CD4-positive, alpha-beta T cell (primary cell): ENCODE measurements at regions of chr1 and their contacts with region 1.

Region 1: GRCh38 chr1:101238681-101239094 is 1.9 kb downstream of the S1PR1 start:
- DNase-seq: peak; percentile 73 to 92 (median 86)
- ATAC-seq: peak; percentile 25
- H3K4me3 ChIP-seq: peak overlapping the region; percentile 87
- H3K4me3 Mint-ChIP-seq: peak overlapping the region; percentile 98
- H3K27ac ChIP-seq: peak overlapping the region; percentile 56 to 97
- H3K27ac Mint-ChIP-seq: peak overlapping the region; percentile 97
- H3K4me1 ChIP-seq: peaks cover 48% of the 10 kb centered on the region
- H3K4me1 Mint-ChIP-seq: peaks cover 71% of the 10 kb centered on the region
- H3K27me3 ChIP-seq: no peaks in the 10 kb centered on the region
- H3K27me3 Mint-ChIP-seq: peaks cover 3% of the 10 kb centered on the region
- CTCF ChIP-seq: peak; percentile 98

Region 2: DNA sequence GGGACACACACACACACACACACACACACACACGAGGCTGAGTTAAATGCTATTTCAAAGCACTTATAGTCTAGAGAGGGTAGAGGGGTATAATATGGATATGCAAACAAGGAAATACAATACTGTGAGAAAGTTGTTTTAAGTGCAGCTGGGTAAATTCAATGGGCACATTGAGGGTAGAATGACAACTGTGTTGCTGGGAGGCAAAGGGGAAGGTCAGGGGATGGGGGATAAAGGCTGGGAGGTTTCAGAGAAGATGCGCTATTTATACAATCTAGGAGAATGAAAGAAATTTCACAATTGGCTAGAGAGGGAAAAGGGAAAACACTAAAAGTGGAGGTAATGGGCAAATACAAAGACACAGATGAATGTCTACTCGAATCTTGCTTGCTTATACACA is 363.5 kb before region 1 on chr1:
- CTCF ChIA-PET with region 1: no interaction called
- POLR2A ChIA-PET with region 1: no interaction called
- intact Hi-C with region 1: no loop called
- DNase-seq: no peak
- ATAC-seq: no peak
- H3K4me3 ChIP-seq: no peak overlapping the region
- H3K4me3 Mint-ChIP-seq: no peak overlapping the region
- H3K27ac ChIP-seq: no peak overlapping the region
- H3K27ac Mint-ChIP-seq: no peak overlapping the region
- H3K4me1 ChIP-seq: no peaks in the 10 kb centered on the region
- H3K4me1 Mint-ChIP-seq: no peaks in the 10 kb centered on the region
- H3K27me3 ChIP-seq: no peaks in the 10 kb centered on the region
- H3K27me3 Mint-ChIP-seq: no peaks in the 10 kb centered on the region
- CTCF ChIP-seq: no peak

Region 3: GRCh38 chr1:100921109-100921706 is 317.5 kb before region 1 on chr1:
- CTCF ChIA-PET with region 1: interaction called, 24 read pairs
- POLR2A ChIA-PET with region 1: interaction called, 39 read pairs
- intact Hi-C with region 1: loop called in 1 of 2 experiments (anchors 2 kb)
- DNase-seq: peak in 4 of 14 experiments; percentile 19 to 80 (median 74)
- ATAC-seq: no peak
- H3K4me3 ChIP-seq: no peak overlapping the region
- H3K4me3 Mint-ChIP-seq: no peak overlapping the region
- H3K27ac ChIP-seq: no peak overlapping the region
- H3K27ac Mint-ChIP-seq: peak overlapping the region; percentile 71
- H3K4me1 ChIP-seq: peaks cover 28% of the 10 kb centered on the region
- H3K4me1 Mint-ChIP-seq: peaks cover 39% of the 10 kb centered on the region
- H3K27me3 ChIP-seq: no peaks in the 10 kb centered on the region
- H3K27me3 Mint-ChIP-seq: no peaks in the 10 kb centered on the region
- CTCF ChIP-seq: peak; percentile 97

Region 4: GRCh38 chr1:101025657-101026504 is 212.8 kb before region 1 on chr1 and contains the start of gene DPH5:
- CTCF ChIA-PET with region 1: interaction called, 11 read pairs
- POLR2A ChIA-PET with region 1: interaction called, 3 read pairs
- intact Hi-C with region 1: loop called (anchors 2 kb)
- DNase-seq: peak; percentile 77 to 91 (median 84)
- ATAC-seq: peak; percentile 94
- H3K4me3 ChIP-seq: peak within 1 kb of the TSS; percentile 77
- H3K4me3 Mint-ChIP-seq: peak within 1 kb of the TSS; percentile 97
- H3K27ac ChIP-seq: peak within 1 kb of the TSS; percentile 63 to 75
- H3K27ac Mint-ChIP-seq: peak within 1 kb of the TSS; percentile 98
- H3K4me1 ChIP-seq: peaks cover 19% of the 10 kb centered on the region
- H3K4me1 Mint-ChIP-seq: peaks cover 91% of the 10 kb centered on the region
- H3K27me3 ChIP-seq: no peaks in the 10 kb centered on the region
- H3K27me3 Mint-ChIP-seq: no peaks in the 10 kb centered on the region
- CTCF ChIP-seq: no peak
- total RNA-seq, gene DPH5: 31.3 to 35.4 TPM

Region 5: DNA sequence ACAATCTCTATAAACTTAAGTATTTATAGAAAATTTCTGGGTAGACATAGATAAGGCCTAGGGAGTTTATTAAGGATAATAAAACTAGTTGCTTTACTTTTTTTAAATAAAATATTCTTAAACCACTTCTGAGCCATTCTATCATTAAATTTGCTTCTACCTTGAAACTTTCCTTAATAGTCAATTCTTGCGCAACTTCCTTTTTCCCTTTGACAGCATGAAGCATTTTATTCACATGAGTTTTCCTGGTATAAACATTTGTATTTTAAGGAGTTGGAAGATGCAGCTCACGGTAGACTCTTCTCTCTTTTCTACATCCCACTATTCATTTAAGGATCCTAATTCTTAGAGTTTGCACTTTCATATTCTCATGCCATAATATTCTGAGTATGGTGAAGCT is 137.3 kb before region 1 on chr1:
- CTCF ChIA-PET with region 1: no interaction called
- POLR2A ChIA-PET with region 1: no interaction called
- intact Hi-C with region 1: no loop called
- DNase-seq: no peak
- ATAC-seq: no peak
- H3K4me3 ChIP-seq: no peak overlapping the region
- H3K4me3 Mint-ChIP-seq: no peak overlapping the region
- H3K27ac ChIP-seq: no peak overlapping the region
- H3K27ac Mint-ChIP-seq: no peak overlapping the region
- H3K4me1 ChIP-seq: no peaks in the 10 kb centered on the region
- H3K4me1 Mint-ChIP-seq: peaks cover 4% of the 10 kb centered on the region
- H3K27me3 ChIP-seq: no peaks in the 10 kb centered on the region
- H3K27me3 Mint-ChIP-seq: no peaks in the 10 kb centered on the region
- CTCF ChIP-seq: no peak

Region 6: DNA sequence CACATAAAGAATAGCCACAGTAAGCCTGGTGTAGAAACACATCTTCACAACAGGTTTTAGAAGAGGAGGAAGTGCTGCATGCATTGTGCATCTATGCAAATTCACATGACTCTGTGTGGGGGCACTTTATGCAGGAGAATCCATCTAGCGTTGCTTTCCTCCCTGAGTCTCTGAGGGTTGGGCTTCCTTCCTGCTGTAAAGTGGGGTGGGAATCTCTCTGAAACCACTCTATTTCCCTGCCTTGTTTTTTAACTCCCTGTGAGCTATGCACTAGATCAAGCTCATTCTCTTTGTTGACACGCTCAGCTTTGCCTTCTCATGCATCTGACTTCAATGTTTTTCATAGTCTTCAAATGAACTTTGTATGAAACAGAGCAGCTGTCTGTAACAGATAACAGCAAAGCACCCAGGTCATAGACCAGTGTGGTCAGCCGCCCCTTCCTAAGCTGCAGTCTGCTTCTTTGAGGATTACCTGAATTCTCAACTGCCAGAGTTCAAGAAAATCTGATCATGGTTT is 110.4 kb before region 1 on chr1:
- CTCF ChIA-PET with region 1: interaction called, 7 read pairs
- POLR2A ChIA-PET with region 1: interaction called, 13 read pairs
- intact Hi-C with region 1: no loop called
- DNase-seq: peak in 13 of 14 experiments; percentile 5 to 64 (median 37)
- ATAC-seq: peak; percentile 71
- H3K4me3 ChIP-seq: no peak overlapping the region
- H3K4me3 Mint-ChIP-seq: peak overlapping the region; percentile 75
- H3K27ac ChIP-seq: peak overlapping the region; percentile 33 to 66
- H3K27ac Mint-ChIP-seq: peak overlapping the region; percentile 83
- H3K4me1 ChIP-seq: peaks cover 33% of the 10 kb centered on the region
- H3K4me1 Mint-ChIP-seq: peaks cover 73% of the 10 kb centered on the region
- H3K27me3 ChIP-seq: no peaks in the 10 kb centered on the region
- H3K27me3 Mint-ChIP-seq: no peaks in the 10 kb centered on the region
- CTCF ChIP-seq: no peak

Region 7: GRCh38 chr1:101257500-101258325 is 19.0 kb after region 1 on chr1:
- CTCF ChIA-PET with region 1: interaction called, 26 read pairs
- POLR2A ChIA-PET with region 1: interaction called, 55 read pairs
- intact Hi-C with region 1: loop called in 1 of 2 experiments (anchors 2 kb)
- DNase-seq: peak in 5 of 14 experiments; percentile 24 to 81 (median 64)
- ATAC-seq: peak; percentile 72
- H3K4me3 ChIP-seq: no peak overlapping the region
- H3K4me3 Mint-ChIP-seq: peak overlapping the region; percentile 56
- H3K27ac ChIP-seq: peak overlapping the region; percentile 47 to 54
- H3K27ac Mint-ChIP-seq: peak overlapping the region; percentile 47
- H3K4me1 ChIP-seq: peaks cover 46% of the 10 kb centered on the region
- H3K4me1 Mint-ChIP-seq: peaks cover 65% of the 10 kb centered on the region
- H3K27me3 ChIP-seq: no peaks in the 10 kb centered on the region
- H3K27me3 Mint-ChIP-seq: no peaks in the 10 kb centered on the region
- CTCF ChIP-seq: no peak

Region 8: DNA sequence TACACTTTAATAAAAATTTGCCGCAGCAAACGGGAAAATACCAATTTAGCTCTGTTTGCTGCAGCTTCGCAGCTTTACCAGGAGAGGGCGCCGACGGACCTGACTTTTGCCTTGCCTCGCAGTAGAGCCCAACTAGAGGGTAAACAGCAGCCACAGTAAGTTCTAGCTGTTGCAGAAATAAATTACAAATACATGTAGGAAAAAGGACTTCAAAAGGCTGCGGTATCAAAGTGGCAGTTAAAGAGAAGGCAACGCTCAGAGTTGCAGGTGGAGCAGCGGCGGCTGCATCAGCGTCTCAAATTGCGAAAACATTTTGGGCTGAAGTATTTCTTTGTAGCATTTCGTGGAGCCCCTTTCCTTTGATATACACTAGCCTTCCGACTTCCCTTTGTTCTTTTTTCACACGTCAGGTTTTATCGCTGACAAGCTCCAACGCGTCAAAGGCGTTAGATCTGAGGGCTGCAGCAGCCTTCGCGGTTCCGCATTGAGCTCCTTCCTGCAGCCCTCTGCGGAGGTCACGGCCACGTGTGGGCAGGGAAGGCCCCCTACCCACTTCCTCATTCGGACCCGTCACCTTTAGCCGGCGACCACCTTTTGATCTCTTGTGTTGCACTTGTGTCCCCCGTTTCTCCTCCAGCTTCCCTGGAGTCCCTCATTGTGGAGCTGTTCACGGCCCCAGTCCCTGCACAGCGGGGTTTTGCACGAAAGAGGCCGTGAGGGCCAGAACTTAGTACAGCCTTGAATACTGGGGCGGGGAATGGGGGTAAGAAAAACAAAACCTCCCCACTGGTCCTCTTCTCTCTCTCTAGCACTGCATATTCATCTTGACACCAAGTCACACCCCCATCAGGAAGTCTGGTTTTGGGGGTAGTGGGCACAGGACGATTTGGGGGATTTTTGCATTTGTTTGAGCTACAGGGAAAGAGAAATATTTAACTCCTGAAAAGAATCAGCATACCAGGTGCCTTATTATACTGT is 70.9 kb after region 1 on chr1:
- CTCF ChIA-PET with region 1: interaction called, 15 read pairs
- POLR2A ChIA-PET with region 1: interaction called, 45 read pairs
- intact Hi-C with region 1: loop called in 1 of 2 experiments (anchors 1 kb)
- DNase-seq: peak; percentile 53 to 94 (median 74)
- ATAC-seq: peak; percentile 76
- H3K4me3 ChIP-seq: peak overlapping the region; percentile 52
- H3K4me3 Mint-ChIP-seq: peak overlapping the region; percentile 76
- H3K27ac ChIP-seq: peak overlapping the region; percentile 82 to 88
- H3K27ac Mint-ChIP-seq: peak overlapping the region; percentile 96
- H3K4me1 ChIP-seq: peaks cover 56% of the 10 kb centered on the region
- H3K4me1 Mint-ChIP-seq: peaks cover 66% of the 10 kb centered on the region
- H3K27me3 ChIP-seq: no peaks in the 10 kb centered on the region
- H3K27me3 Mint-ChIP-seq: no peaks in the 10 kb centered on the region
- CTCF ChIP-seq: peak; percentile 89